Activated B cell treated with CpG ODN at 0.5 μM for 24 hours (primary cell): ENCODE measurements at regions of chr12 and their contacts with region 1.

Region 1: DNA sequence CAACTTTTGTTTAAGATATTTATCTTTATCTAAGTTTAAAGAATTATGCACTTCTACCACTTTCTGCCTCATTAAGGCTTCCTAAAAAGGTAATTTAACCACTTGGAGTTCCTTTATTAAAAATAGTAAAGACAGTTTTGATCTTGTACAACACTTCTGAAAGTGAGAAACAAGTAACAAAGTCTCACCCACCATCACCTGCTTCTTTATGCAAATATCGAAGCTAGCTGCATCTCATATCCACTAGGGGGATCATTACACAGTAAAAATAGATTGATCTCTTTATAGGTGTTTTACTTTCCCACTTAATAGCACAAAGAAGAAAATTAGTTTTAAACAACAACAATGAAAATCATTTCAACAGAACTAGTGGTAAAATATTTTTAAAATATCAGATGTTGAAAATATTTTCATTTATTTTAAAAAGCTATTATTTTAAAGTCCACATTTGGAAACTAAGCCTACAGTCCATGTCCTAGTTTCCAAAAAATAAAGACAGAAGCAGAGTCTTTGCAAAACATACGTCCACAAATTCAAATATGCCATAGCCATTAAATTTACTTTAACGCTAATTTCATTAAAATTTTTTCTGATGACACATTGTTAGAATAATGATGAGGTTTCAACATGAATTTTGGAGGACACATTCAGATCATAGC is 160.0 kb upstream of the SOX5 start:
- DNase-seq: no peak
- ATAC-seq: peak; percentile 64
- H3K4me3 Mint-ChIP-seq: no peak overlapping the region
- H3K27ac Mint-ChIP-seq: no peak overlapping the region
- H3K4me1 Mint-ChIP-seq: peaks cover 5% of the 10 kb centered on the region
- H3K27me3 Mint-ChIP-seq: no peaks in the 10 kb centered on the region
- CTCF ChIP-seq: peak; percentile 36

Region 2: DNA sequence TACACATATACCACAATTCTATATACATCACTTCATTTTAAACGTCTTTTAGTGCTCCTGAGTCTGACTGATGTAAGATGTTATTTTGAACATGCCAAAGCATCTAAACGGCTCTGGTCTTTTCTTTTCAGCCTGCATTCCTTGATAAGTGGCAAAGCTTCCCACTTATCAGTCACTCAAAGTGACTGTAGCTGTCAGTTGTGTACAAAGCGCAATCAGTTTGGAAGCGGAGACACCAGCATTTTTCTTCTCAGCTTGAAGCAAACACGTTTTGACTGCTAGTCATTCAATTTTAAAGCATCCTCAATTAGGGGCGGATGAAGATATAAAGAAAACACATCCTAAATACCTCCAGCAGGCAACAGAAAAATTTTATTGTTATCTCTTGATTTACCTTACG is 386.9 kb before region 1 on chr12:
- CTCF ChIA-PET with region 1: no interaction called
- POLR2A ChIA-PET with region 1: no interaction called
- intact Hi-C with region 1: no loop called
- DNase-seq: no peak
- ATAC-seq: no peak
- H3K4me3 Mint-ChIP-seq: no peak overlapping the region
- H3K27ac Mint-ChIP-seq: no peak overlapping the region
- H3K4me1 Mint-ChIP-seq: no peaks in the 10 kb centered on the region
- H3K27me3 Mint-ChIP-seq: no peaks in the 10 kb centered on the region
- CTCF ChIP-seq: no peak

Region 3: GRCh38 chr12:24127919-24128721 is 18.6 kb after region 1 on chr12:
- CTCF ChIA-PET with region 1: no interaction called
- POLR2A ChIA-PET with region 1: no interaction called
- intact Hi-C with region 1: loop called (anchors 2 kb)
- DNase-seq: no peak
- ATAC-seq: peak; percentile 70
- H3K4me3 Mint-ChIP-seq: no peak overlapping the region
- H3K27ac Mint-ChIP-seq: no peak overlapping the region
- H3K4me1 Mint-ChIP-seq: peaks cover 14% of the 10 kb centered on the region
- H3K27me3 Mint-ChIP-seq: no peaks in the 10 kb centered on the region
- CTCF ChIP-seq: no peak

Region 4: DNA sequence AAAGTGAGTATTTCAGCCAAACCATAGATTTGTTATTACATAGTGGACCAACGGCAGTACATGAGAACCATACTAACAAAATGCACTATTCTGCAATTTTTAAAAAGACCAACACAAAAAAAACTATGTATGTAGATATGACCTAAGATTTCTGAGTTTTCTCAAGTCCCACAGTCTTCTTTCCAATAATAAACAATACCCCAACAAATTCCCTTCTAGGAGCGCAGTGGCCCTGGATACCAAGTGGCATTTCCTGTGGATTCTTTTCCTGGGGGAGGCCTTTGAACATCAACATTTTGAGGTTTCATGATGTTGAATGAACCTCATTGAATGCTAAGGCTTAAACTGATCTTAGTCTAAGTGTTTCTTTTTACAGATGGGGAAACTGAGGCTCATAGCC is 628.9 kb after region 1 on chr12:
- CTCF ChIA-PET with region 1: no interaction called
- POLR2A ChIA-PET with region 1: no interaction called
- intact Hi-C with region 1: no loop called
- DNase-seq: no peak
- ATAC-seq: no peak
- H3K4me3 Mint-ChIP-seq: no peak overlapping the region
- H3K27ac Mint-ChIP-seq: no peak overlapping the region
- H3K4me1 Mint-ChIP-seq: peaks cover 86% of the 10 kb centered on the region
- H3K27me3 Mint-ChIP-seq: no peaks in the 10 kb centered on the region
- CTCF ChIP-seq: no peak